ENCODE measurements at regions of chr5 and their contacts with region 1.

Region 1: GRCh38 chr5:57298295-57298984 is 124.6 kb downstream of the GPBP1 start:
- DNase-seq: peak; percentile 84 to 89
- H3K4me3 ChIP-seq: no peak overlapping the region
- H3K4me3 Mint-ChIP-seq: peak overlapping the region; percentile 53
- H3K27ac Mint-ChIP-seq: no peak overlapping the region
- H3K4me1 ChIP-seq: peaks cover 10% of the 10 kb centered on the region
- H3K4me1 Mint-ChIP-seq: peaks cover 10% of the 10 kb centered on the region
- H3K27me3 ChIP-seq: no peaks in the 10 kb centered on the region
- H3K27me3 Mint-ChIP-seq: no peaks in the 10 kb centered on the region
- CTCF ChIP-seq: peak; percentile 74 to 79

Region 2: GRCh38 chr5:57338068-57338892 is 39.8 kb after region 1 on chr5:
- CTCF ChIA-PET with region 1: no interaction called
- POLR2A ChIA-PET with region 1: no interaction called
- intact Hi-C with region 1: loop called (anchors 2 kb)
- DNase-seq: peak; percentile 54 to 58
- H3K4me3 ChIP-seq: no peak overlapping the region
- H3K4me3 Mint-ChIP-seq: peak overlapping the region; percentile 35
- H3K27ac Mint-ChIP-seq: peak overlapping the region; percentile 61
- H3K4me1 ChIP-seq: peaks cover 51% of the 10 kb centered on the region
- H3K4me1 Mint-ChIP-seq: peaks cover 17% of the 10 kb centered on the region
- H3K27me3 ChIP-seq: no peaks in the 10 kb centered on the region
- H3K27me3 Mint-ChIP-seq: no peaks in the 10 kb centered on the region
- CTCF ChIP-seq: peak; percentile 41 to 46

Region 3: GRCh38 chr5:57383093-57383861 is 84.8 kb after region 1 on chr5:
- CTCF ChIA-PET with region 1: no interaction called
- POLR2A ChIA-PET with region 1: no interaction called
- intact Hi-C with region 1: loop called (anchors 5 kb)
- DNase-seq: peak; percentile 76 to 79
- H3K4me3 ChIP-seq: no peak overlapping the region
- H3K4me3 Mint-ChIP-seq: peak overlapping the region; percentile 16
- H3K27ac Mint-ChIP-seq: peak overlapping the region; percentile 60
- H3K4me1 ChIP-seq: peaks cover 20% of the 10 kb centered on the region
- H3K4me1 Mint-ChIP-seq: peaks cover 16% of the 10 kb centered on the region
- H3K27me3 ChIP-seq: no peaks in the 10 kb centered on the region
- H3K27me3 Mint-ChIP-seq: no peaks in the 10 kb centered on the region
- CTCF ChIP-seq: peak; percentile 24 to 41

Region 4: DNA sequence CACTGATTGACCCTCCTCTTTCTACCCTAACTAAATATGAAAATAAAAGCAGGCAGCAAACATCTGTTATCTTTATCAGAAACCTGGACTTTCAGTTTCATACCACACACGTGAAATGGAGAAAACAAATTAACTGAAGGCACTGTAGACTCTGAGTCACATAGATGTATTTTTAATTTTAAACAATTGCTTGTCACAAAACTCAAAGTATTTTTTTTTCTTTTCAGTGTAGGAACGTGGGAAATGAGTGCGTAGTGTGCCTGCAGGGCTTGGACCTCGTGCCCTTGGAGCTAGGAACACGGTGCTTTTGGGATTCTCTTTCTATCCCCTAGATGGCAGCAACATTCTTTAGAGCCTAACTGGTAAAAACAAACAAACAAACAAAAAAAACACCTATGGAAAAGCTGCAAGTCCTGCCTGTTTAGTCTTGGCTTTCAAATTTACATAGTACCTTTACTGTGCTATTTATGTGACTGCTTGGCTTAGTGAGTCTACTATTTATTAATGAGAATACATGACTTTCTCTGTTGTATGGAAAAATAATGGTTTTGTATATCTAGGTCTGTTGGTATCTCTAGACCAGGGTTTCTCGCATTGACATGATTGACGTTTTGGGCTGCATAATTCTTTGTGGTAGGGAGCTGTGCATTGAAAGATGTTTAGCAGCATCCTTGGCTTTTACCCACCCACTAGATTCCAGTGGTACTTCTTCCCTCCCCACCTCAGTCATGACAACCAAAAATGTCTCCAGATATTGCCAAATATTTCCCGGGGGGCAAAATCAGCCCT is 201.0 kb after region 1 on chr5:
- CTCF ChIA-PET with region 1: interaction called, 8 read pairs
- POLR2A ChIA-PET with region 1: no interaction called
- intact Hi-C with region 1: loop called (anchors 1 kb)
- DNase-seq: peak in 1 of 2 experiments; percentile 53
- H3K4me3 ChIP-seq: no peak overlapping the region
- H3K4me3 Mint-ChIP-seq: peak overlapping the region; percentile 46
- H3K27ac Mint-ChIP-seq: no peak overlapping the region
- H3K4me1 ChIP-seq: peaks cover 7% of the 10 kb centered on the region
- H3K4me1 Mint-ChIP-seq: peaks cover 8% of the 10 kb centered on the region
- H3K27me3 ChIP-seq: no peaks in the 10 kb centered on the region
- H3K27me3 Mint-ChIP-seq: no peaks in the 10 kb centered on the region
- CTCF ChIP-seq: peak; percentile 67 to 77

Region 5: GRCh38 chr5:57887851-57888621 is 589.6 kb after region 1 on chr5:
- CTCF ChIA-PET with region 1: interaction called, 5 read pairs
- POLR2A ChIA-PET with region 1: no interaction called
- intact Hi-C with region 1: loop called (anchors 1 kb)
- DNase-seq: peak; percentile 72 to 75
- H3K4me3 ChIP-seq: no peak overlapping the region
- H3K4me3 Mint-ChIP-seq: no peak overlapping the region
- H3K27ac Mint-ChIP-seq: no peak overlapping the region
- H3K4me1 ChIP-seq: no peaks in the 10 kb centered on the region
- H3K4me1 Mint-ChIP-seq: no peaks in the 10 kb centered on the region
- H3K27me3 ChIP-seq: no peaks in the 10 kb centered on the region
- H3K27me3 Mint-ChIP-seq: no peaks in the 10 kb centered on the region
- CTCF ChIP-seq: peak; percentile 55 to 80

Measured in Caco-2 (cell line).